ENCODE measurements at regions of chr9 and their contacts with region 1.

Region 1: DNA sequence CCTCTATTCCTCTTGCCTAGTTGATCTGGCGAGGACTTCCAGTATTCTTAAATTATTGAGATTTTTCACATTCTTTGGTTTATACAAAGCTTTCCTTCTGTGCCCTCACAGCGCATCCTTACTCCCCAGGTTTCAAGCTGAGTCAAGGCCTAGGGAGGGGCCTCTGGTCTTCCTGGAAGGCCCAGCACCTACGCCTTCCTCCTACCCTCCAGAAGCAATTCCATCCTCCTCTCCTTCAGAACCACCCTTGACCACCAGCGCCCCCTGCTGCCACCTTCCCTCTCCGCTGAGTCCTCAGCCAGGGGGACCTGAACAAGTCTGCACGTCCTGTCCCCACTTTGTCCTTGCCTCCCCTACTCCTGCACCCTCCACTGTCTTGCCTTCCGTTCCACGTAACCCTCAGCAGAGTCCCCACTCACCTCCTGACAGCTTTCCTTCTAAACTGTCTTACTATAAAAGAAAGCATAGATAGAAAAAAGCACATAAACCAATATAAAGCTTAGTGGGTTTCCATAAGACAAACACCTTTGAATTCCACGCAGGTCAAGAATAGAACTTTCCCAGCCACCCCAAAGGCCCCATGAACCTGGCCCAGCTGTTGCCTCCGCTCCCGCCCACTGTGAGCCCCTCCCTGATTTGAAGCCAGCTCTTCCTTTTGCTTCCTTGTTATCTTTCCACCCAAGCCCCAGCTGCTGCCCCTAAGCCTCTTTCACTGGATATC is 63.0 kb upstream of the CTSL start:
- DNase-seq: peak; percentile 74 to 86 (median 80)
- ATAC-seq: peak; percentile 75
- H3K4me3 ChIP-seq: no peak overlapping the region
- H3K27ac ChIP-seq: no peak overlapping the region
- H3K4me1 ChIP-seq: peaks cover 5% of the 10 kb centered on the region
- H3K27me3 ChIP-seq: no peaks in the 10 kb centered on the region
- CTCF ChIP-seq: peak; percentile 71 to 97 (median 79)
- POLR2A ChIP-seq: no peak

Region 2: GRCh38 chr9:87336914-87337333 is 326.0 kb before region 1 on chr9:
- intact Hi-C with region 1: loop called (anchors 5 kb)
- DNase-seq: peak; percentile 59 to 76 (median 68)
- ATAC-seq: peak; percentile 88
- H3K4me3 ChIP-seq: peak overlapping the region in 1 of 2 donors; percentile 0
- H3K27ac ChIP-seq: peak overlapping the region in 3 of 4 donors; percentile 11 to 55 (median 34)
- H3K4me1 ChIP-seq: peaks cover 16% of the 10 kb centered on the region
- H3K27me3 ChIP-seq: no peaks in the 10 kb centered on the region
- CTCF ChIP-seq: peak; percentile 54 to 86 (median 84)
- POLR2A ChIP-seq: no peak

Region 3: GRCh38 chr9:87500491-87501270 is 162.3 kb before region 1 on chr9:
- intact Hi-C with region 1: loop called (anchors 10 kb)
- DNase-seq: no peak
- ATAC-seq: no peak
- H3K4me3 ChIP-seq: no peak overlapping the region
- H3K27ac ChIP-seq: peak overlapping the region in 2 of 4 donors; percentile 93 to 95
- H3K4me1 ChIP-seq: peaks cover 61% of the 10 kb centered on the region
- H3K27me3 ChIP-seq: no peaks in the 10 kb centered on the region
- CTCF ChIP-seq: peak in 4 of 7 experiments; percentile 1 to 21 (median 16)
- POLR2A ChIP-seq: no peak

Region 4: DNA sequence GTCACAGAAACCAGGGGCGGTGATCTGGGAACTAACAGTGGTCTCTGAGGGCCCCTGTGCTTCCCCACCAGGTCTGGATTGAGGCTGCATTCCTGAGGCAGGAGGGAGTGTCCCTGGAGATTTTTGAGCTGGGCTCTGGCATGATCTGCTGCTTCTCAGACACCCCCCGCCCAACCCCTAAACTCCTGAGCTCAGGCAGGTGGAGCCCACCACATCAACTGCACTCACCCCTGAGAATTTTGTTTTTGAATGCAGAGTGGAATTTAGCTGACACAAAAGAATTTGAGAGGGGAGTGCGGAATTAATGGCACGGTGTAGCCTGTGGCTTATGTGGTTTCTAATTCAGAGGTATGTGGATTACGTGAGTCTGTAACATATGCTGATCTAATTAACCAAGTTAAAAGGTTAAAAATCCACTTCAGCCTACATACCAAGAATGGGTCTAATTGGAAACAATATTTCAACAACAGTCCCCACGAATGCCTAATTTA is 39.0 kb after region 1 on chr9:
- intact Hi-C with region 1: no loop called
- DNase-seq: no peak
- ATAC-seq: no peak
- H3K4me3 ChIP-seq: no peak overlapping the region
- H3K27ac ChIP-seq: no peak overlapping the region
- H3K4me1 ChIP-seq: peaks cover 18% of the 10 kb centered on the region
- H3K27me3 ChIP-seq: no peaks in the 10 kb centered on the region
- CTCF ChIP-seq: no peak
- POLR2A ChIP-seq: no peak